ENCODE measurements at regions of chr11 and their contacts with region 1.

Region 1: DNA sequence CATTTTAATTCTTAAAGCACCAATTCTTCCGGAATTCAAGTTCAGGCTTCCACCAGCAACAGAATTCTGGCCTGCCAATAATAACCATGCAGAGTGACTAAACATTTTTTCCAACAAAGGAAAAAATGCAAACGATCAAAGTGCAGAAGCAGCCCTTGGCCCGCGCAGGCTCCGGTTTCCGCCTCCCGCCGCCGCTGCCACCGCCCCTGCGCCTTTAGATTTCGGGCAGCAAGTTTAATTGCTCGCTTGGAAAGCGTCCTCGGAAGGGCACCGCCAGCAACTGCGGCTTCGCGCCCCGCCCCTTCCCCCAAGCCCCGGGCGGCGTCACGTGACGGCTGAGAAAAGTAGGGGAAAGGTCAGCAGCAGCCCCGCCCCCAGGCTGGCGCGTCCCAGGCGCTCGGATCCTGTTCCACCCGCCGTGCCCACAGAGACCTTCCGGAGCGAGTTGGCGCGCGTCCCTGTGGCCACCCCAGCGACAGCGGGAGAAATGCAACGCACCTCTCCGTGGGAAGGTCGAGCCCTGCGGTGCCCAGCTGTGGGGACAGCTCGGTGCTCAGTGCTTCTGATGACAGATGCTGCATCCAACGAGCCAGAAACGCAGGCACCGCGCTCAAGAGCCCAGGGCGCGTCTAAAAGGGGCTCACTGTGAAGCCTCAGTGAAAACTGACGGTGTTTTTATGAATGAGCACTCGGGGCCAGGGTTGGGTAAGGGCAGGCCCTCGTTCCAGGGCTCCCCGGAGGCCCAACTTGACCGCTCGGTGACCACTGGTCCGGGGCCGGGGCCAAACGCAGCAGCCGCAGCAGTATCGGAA is 2.5 kb downstream of the CPT1A start:
- DNase-seq: peak; percentile 94
- ATAC-seq: peak; percentile 62
- H3K4me3 Mint-ChIP-seq: peak overlapping the region; percentile 85
- H3K27ac Mint-ChIP-seq: peak overlapping the region; percentile 91
- H3K4me1 Mint-ChIP-seq: peaks cover 54% of the 10 kb centered on the region
- H3K27me3 Mint-ChIP-seq: no peaks in the 10 kb centered on the region
- CTCF ChIP-seq: no peak

Region 2: DNA sequence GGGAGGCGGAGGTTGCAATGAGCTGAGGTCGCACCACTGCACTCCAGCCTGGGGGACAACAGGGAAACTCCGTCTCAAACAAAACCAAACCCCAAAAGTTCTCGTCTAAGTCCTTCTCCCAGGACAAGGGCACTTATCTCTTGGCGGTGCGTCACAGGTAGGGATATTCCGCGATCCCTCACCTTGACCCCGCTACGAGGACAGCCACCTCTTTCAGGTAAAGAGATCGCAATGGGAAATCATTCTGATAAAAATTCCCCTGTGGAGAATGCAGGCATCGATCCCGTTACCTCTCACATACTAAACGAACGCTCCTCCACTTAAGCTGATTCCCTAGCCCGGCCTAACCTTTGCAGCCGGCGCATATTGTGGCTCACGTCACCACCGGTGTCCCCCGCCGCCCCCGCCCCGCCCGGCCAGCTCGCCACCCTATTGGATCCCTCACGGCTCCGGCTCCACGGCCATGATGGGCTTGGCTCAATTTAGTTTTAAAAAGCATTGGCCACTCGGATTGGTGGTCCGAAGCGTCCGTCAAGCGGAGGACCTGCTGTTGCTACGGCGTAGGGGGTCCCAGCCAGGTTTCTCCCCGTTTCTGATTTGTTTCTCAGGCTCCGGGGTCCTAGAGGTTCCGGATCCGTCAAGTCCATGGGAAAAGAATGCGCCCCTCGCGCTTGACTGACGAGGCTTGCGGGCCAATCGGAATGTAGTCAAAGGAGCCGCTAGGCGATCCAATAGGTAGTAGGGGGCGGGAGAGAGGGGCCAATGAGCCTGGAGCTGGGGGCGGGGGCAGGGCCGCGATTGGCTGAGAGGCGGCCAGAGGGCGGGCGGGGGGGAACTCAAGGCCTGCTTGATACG is 379.1 kb before region 1 on chr11:
- CTCF ChIA-PET with region 1: no interaction called
- POLR2A ChIA-PET with region 1: interaction called, 4 read pairs
- intact Hi-C with region 1: loop called (anchors 2 kb)
- DNase-seq: peak; percentile 81
- ATAC-seq: peak; percentile 92
- H3K4me3 Mint-ChIP-seq: peak overlapping the region; percentile 94
- H3K27ac Mint-ChIP-seq: peak overlapping the region; percentile 97
- H3K4me1 Mint-ChIP-seq: peaks cover 39% of the 10 kb centered on the region
- H3K27me3 Mint-ChIP-seq: no peaks in the 10 kb centered on the region
- CTCF ChIP-seq: no peak

Region 3: DNA sequence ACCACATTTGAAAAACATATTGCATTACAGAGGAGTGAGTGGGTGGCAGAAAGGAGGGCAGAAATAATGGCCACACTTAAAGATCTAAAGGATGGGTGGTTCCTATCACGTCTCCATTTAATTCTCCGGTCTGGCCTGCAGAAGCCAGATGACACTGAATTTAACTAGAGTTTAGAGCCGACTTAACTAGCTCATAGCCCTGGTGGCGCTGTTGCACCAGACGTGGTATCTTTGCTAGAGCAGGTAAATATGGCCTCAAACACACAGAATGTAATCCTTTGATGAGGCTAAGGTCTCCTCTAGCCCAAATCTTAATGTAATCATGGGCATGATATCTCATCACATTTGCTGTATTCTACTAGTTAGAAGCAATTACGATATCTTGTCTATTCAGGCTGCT is 206.5 kb before region 1 on chr11:
- CTCF ChIA-PET with region 1: interaction called, 5 read pairs
- POLR2A ChIA-PET with region 1: no interaction called
- intact Hi-C with region 1: loop called (anchors 1 kb)
- DNase-seq: no peak
- ATAC-seq: no peak
- H3K4me3 Mint-ChIP-seq: no peak overlapping the region
- H3K27ac Mint-ChIP-seq: no peak overlapping the region
- H3K4me1 Mint-ChIP-seq: no peaks in the 10 kb centered on the region
- H3K27me3 Mint-ChIP-seq: peaks cover 21% of the 10 kb centered on the region
- CTCF ChIP-seq: no peak

Region 4: DNA sequence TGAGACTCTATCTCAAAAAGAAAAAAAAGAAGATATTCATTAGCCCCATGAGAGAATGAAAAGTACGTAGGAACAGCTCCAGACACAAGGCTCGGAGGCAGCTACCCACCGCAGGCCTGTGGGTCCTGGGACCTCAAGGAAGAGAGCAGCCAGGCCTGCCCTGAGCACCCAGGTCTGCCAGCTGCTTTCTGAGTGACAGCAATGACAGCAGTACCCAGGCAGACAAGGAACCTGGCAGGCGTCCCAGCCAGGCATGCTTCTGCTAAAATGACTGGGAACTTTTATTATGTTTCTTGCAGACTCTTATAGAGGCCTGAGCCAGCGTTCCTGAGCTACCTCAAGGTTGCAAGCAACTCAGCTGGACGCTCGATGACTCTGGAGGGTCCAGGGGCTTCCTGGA is 29.1 kb before region 1 on chr11:
- CTCF ChIA-PET with region 1: interaction called, 11 read pairs
- POLR2A ChIA-PET with region 1: interaction called, 8 read pairs
- intact Hi-C with region 1: loop called (anchors 1 kb)
- DNase-seq: no peak
- ATAC-seq: no peak
- H3K4me3 Mint-ChIP-seq: no peak overlapping the region
- H3K27ac Mint-ChIP-seq: no peak overlapping the region
- H3K4me1 Mint-ChIP-seq: peaks cover 31% of the 10 kb centered on the region
- H3K27me3 Mint-ChIP-seq: no peaks in the 10 kb centered on the region
- CTCF ChIP-seq: no peak

Region 5: GRCh38 chr11:69048718-69049489 is 209.6 kb after region 1 on chr11 and contains the start of gene TPCN2:
- CTCF ChIA-PET with region 1: no interaction called
- POLR2A ChIA-PET with region 1: no interaction called
- intact Hi-C with region 1: loop called (anchors 2 kb)
- DNase-seq: peak; percentile 89
- ATAC-seq: peak; percentile 99
- H3K4me3 Mint-ChIP-seq: peak within 1 kb of the TSS; percentile 81
- H3K27ac Mint-ChIP-seq: peak within 1 kb of the TSS; percentile 70
- H3K4me1 Mint-ChIP-seq: peaks cover 47% of the 10 kb centered on the region
- H3K27me3 Mint-ChIP-seq: peaks cover 8% of the 10 kb centered on the region
- CTCF ChIP-seq: no peak
- total RNA-seq, gene TPCN2: 29.1 and 35.4 TPM in 2 replicates

Region 6: GRCh38 chr11:69296890-69297786 is 457.9 kb after region 1 on chr11:
- CTCF ChIA-PET with region 1: no interaction called
- POLR2A ChIA-PET with region 1: interaction called, 8 read pairs
- intact Hi-C with region 1: loop called (anchors 2 kb)
- DNase-seq: peak; percentile 82
- ATAC-seq: peak; percentile 42
- H3K4me3 Mint-ChIP-seq: peak overlapping the region; percentile 70
- H3K27ac Mint-ChIP-seq: peak overlapping the region; percentile 96
- H3K4me1 Mint-ChIP-seq: peaks cover 79% of the 10 kb centered on the region
- H3K27me3 Mint-ChIP-seq: no peaks in the 10 kb centered on the region
- CTCF ChIP-seq: no peak

Measured in activated B cell treated with CpG ODN at 0.5 μM for 24 hours (primary cell).